Mammary epithelial cell (primary cell): ENCODE measurements at regions of chr3 and their contacts with region 1.

Region 1: GRCh38 chr3:127374086-127375010 is 86.5 kb upstream of the PRR20G start:
- DNase-seq: no peak
- H3K4me3 ChIP-seq: no peak overlapping the region
- H3K27ac ChIP-seq: no peak overlapping the region
- H3K4me1 ChIP-seq: no peaks in the 10 kb centered on the region
- H3K27me3 ChIP-seq: peaks cover 2% of the 10 kb centered on the region
- CTCF ChIP-seq: peak; percentile 47 to 54

Region 2: DNA sequence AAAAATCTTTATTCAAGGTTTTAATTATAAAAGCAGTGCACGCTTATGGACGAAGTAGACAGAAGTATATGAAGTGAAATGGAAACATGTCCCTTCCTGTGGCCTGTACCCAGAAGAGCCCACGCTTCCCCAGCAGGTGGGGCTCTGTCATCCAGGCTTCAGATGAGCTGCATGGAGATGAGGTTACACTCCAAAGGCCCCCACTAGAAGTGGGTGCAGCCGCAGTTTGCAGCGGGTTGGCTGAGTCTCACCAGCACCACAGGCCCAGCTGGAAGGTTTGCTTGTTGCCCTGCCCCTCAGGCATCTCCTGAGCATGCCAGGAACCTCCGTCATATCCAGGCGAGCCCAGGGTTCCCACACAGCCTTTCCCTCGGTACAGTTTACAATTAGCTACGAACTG is 119.6 kb before region 1 on chr3:
- CTCF ChIA-PET with region 1: no interaction called
- dilution Hi-C with region 1: no loop called
- in situ Hi-C with region 1: no loop called
- intact Hi-C with region 1: loop called (anchors 1 kb)
- DNase-seq: peak; percentile 67
- H3K4me3 ChIP-seq: no peak overlapping the region
- H3K27ac ChIP-seq: no peak overlapping the region
- H3K4me1 ChIP-seq: no peaks in the 10 kb centered on the region
- H3K27me3 ChIP-seq: no peaks in the 10 kb centered on the region
- CTCF ChIP-seq: peak; percentile 48 to 75

Region 3: GRCh38 chr3:127729556-127730056 is 355.3 kb after region 1 on chr3:
- CTCF ChIA-PET with region 1: no interaction called
- dilution Hi-C with region 1: no loop called
- in situ Hi-C with region 1: no loop called
- intact Hi-C with region 1: no loop called
- DNase-seq: no peak
- H3K4me3 ChIP-seq: no peak overlapping the region
- H3K27ac ChIP-seq: no peak overlapping the region
- H3K4me1 ChIP-seq: peaks cover 9% of the 10 kb centered on the region
- H3K27me3 ChIP-seq: no peaks in the 10 kb centered on the region
- CTCF ChIP-seq: no peak